Prostate gland (tissue), 2 donors: ENCODE measurements at regions of chr19 and their contacts with region 1.

Region 1: GRCh38 chr19:2391118-2391725 is 31.2 kb downstream of the TMPRSS9 start:
- DNase-seq: peak; percentile 10
- H3K4me3 ChIP-seq: no peak overlapping the region
- H3K27ac ChIP-seq: no peak overlapping the region
- H3K4me1 ChIP-seq: no peaks in the 10 kb centered on the region
- H3K27me3 ChIP-seq: no peaks in the 10 kb centered on the region
- CTCF ChIP-seq: peak; percentile 64 to 80 (median 71)
- POLR2A ChIP-seq: no peak

Region 2: DNA sequence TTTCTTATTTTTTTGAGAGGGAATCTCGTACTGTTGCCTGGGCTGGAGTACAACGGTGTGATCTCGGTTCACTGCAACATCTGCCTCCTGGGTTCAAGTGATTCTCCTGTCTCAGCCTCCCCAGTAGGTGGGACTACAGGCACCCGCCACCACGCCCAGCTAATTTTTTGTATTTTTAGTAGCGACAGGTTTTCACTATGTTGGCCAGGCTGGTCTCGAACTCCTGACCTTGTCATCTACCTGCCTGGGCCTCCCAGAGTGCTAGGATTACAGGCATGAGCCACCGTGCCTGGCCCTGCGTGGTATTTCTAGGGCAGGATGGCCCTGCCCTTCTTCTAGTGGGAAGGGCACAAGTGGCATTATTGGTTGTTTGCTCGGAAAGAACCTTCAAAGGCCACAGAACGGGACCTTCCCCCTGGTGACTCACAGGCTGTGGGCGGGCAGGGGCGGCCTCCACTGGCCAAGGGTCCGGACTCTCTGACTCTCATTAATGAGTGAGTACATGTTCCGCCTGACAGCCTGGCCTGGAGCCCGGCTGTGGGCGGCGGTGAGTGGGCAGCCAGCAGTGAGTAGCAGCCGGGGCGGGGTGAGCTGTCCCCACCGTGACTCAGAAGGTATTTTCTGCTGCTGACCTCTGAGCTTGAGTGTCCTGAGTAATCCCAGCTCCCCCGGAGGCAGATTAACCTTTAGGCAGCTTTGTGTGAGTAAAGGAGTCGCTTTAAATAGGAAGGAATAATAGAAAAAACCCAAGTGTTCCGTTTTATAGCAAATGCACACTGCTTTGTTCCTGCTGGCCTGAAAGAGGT is 222.4 kb before region 1 on chr19:
- intact Hi-C with region 1: loop called (anchors 5 kb)
- DNase-seq: peak; percentile 93
- H3K4me3 ChIP-seq: no peak overlapping the region
- H3K27ac ChIP-seq: peak overlapping the region; percentile 76 to 89
- H3K4me1 ChIP-seq: peaks cover 26% of the 10 kb centered on the region
- H3K27me3 ChIP-seq: no peaks in the 10 kb centered on the region
- CTCF ChIP-seq: no peak
- POLR2A ChIP-seq: peak; percentile 64

Region 3: GRCh38 chr19:2375341-2376121 is 15.7 kb before region 1 on chr19:
- intact Hi-C with region 1: no loop called
- DNase-seq: no peak
- H3K4me3 ChIP-seq: no peak overlapping the region
- H3K27ac ChIP-seq: no peak overlapping the region
- H3K4me1 ChIP-seq: no peaks in the 10 kb centered on the region
- H3K27me3 ChIP-seq: no peaks in the 10 kb centered on the region
- CTCF ChIP-seq: no peak
- POLR2A ChIP-seq: no peak